Calu3 (cell line): ENCODE measurements at regions of chr7 and their contacts with region 1.

Region 1: DNA sequence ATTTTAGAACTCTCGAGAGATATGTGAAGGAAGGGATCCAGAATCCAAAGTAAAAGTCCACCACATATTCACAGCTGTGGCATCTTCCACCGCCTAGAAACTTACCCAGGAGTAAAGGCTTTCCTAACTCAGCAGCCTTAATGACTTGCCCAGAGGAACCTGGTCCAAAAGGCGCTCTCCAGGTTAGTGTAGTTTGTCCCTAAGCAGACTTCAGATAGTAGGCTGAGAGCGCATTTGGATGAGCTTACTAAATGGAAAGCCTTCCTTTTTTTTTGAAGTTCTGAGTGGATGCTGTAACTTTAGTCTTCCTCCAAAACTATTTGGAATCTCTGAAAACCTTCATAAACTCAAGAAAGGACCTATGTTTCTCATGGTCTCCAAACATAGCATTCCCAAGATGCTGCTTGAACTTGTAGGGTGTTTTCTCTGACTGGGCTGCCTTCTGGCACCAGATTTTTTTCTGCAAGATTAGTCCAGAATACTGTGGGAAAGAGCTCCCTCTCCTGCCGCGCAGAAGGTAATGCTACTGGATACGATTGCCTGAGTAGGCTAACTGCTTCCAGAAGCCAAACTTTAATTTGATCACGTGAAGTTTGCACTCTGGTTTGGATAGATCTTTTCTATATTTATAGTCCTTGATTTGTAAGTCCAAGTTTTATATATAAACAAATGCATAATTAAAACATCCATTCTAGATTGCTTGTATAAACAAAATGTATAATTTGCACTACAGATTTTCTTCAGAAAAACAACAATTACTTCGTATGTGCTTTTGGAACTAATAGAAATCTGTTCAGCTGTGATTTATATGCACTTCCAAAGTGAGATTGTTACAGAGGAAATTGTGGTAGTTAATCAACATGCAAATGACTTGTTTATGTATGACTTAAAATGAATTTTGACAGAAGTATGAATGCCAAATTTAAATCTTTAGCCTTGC is 19.6 kb upstream of the GPR37 start:
- DNase-seq: peak; percentile 58
- H3K4me3 Mint-ChIP-seq: no peak overlapping the region
- H3K27ac Mint-ChIP-seq: no peak overlapping the region
- H3K4me1 Mint-ChIP-seq: no peaks in the 10 kb centered on the region
- H3K27me3 Mint-ChIP-seq: no peaks in the 10 kb centered on the region
- CTCF ChIP-seq: peak; percentile 69

Region 2: DNA sequence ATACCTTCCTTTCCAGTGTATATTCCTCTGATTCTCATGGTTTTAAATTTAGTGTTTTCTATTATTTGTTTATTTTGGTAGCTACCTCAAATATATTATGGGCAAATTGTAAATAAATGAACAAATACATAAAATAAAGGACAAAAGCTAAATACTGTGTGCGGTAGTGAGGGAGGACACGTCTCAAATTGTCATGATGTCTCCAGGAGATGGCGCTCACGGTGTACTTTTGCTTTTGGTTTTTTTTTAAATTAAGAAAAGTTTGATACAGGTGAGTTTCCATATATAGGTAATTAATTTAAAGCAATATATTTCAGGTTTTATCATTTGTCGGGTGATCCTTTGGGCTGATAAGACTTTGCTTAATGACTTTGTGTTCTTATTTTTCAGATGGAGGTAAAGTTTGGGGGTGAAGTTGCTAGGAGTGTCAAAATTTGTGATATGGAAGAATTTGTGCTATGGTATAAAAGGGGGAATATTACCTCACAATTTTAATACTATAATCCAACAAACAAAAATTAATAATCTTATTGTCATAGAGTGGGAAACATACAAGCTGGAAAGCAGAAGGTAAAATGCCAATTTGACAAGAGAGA is 683.9 kb before region 1 on chr7:
- CTCF ChIA-PET with region 1: no interaction called
- intact Hi-C with region 1: loop called (anchors 2 kb)
- DNase-seq: peak; percentile 43
- H3K4me3 Mint-ChIP-seq: no peak overlapping the region
- H3K27ac Mint-ChIP-seq: no peak overlapping the region
- H3K4me1 Mint-ChIP-seq: no peaks in the 10 kb centered on the region
- H3K27me3 Mint-ChIP-seq: peaks cover 58% of the 10 kb centered on the region
- CTCF ChIP-seq: peak; percentile 61

Region 3: DNA sequence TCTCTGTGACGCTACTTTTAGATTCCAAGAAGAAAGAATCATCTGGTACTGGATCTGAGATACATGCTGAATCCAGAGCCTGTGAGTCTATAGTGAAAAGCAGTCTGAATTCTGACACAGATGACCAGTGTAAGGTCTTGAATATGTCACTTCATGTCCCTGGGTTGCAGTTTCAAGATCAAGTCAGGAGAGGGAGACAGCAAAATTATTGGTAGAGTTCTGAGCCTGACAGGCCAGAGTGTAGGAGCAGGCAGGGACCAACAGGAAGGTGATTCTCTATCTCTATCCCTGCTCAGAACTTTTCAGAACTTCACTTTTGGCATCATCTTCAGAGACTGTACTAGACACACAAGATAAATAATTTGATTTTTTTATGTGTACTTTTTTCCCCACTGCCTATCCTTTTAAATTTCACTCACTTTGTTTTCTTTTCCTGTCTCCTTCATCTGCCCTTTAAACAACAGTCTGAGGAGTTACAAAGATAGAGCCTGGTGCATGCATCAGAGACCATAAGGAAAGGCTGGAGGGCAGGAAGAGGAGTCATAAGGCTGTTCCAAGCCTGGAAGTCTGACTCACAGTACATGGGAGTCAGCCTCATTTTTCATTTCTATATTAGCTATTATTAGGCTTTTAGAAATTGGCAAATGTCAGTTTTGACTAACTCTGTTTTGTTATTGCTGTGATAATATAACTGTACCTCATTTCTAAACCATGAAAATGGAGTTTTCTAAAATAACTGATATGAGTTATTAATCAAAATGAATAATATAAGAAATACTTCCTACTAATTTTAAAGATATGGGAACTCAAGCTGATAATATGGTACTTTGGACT is 632.1 kb before region 1 on chr7:
- CTCF ChIA-PET with region 1: interaction called, 4 read pairs
- intact Hi-C with region 1: loop called (anchors 1 kb)
- DNase-seq: peak; percentile 41
- H3K4me3 Mint-ChIP-seq: no peak overlapping the region
- H3K27ac Mint-ChIP-seq: no peak overlapping the region
- H3K4me1 Mint-ChIP-seq: no peaks in the 10 kb centered on the region
- H3K27me3 Mint-ChIP-seq: no peaks in the 10 kb centered on the region
- CTCF ChIP-seq: peak; percentile 56

Region 4: GRCh38 chr7:124171068-124171467 is 614.1 kb before region 1 on chr7:
- CTCF ChIA-PET with region 1: interaction called, 7 read pairs
- intact Hi-C with region 1: loop called (anchors 1 kb)
- DNase-seq: peak; percentile 47
- H3K4me3 Mint-ChIP-seq: no peak overlapping the region
- H3K27ac Mint-ChIP-seq: no peak overlapping the region
- H3K4me1 Mint-ChIP-seq: no peaks in the 10 kb centered on the region
- H3K27me3 Mint-ChIP-seq: no peaks in the 10 kb centered on the region
- CTCF ChIP-seq: peak; percentile 20

Region 5: DNA sequence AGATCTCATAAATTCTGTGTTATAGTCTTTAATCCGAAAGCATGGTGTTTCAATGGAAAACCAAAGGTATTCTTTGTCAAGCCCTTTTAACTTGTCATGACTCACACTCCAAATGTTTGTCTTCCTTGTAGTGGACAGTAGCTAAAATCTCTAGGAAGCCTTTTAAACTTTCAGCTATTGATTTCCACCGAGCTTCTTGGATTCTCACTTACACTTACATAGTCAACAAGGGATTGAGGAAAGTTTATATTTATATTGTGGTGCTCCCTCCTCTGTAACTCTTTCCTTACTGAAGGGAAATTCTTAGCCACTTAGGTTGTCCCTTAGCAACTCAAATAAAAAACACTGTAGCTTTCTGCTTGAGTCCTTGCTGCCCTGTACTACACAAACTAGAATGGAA is 11.6 kb after region 1 on chr7:
- CTCF ChIA-PET with region 1: no interaction called
- intact Hi-C with region 1: no loop called
- DNase-seq: no peak
- H3K4me3 Mint-ChIP-seq: no peak overlapping the region
- H3K27ac Mint-ChIP-seq: no peak overlapping the region
- H3K4me1 Mint-ChIP-seq: peaks cover 2% of the 10 kb centered on the region
- H3K27me3 Mint-ChIP-seq: no peaks in the 10 kb centered on the region
- CTCF ChIP-seq: no peak